ENCODE measurements at regions of chr1 and their contacts with region 1.

Region 1: GRCh38 chr1:234499119-234499942 is 20.4 kb upstream of the TARBP1 start:
- DNase-seq: peak; percentile 93
- ATAC-seq: peak; percentile 54
- H3K4me3 Mint-ChIP-seq: no peak overlapping the region
- H3K27ac Mint-ChIP-seq: peak overlapping the region; percentile 80
- H3K4me1 Mint-ChIP-seq: peaks cover 76% of the 10 kb centered on the region
- H3K27me3 Mint-ChIP-seq: peaks cover 3% of the 10 kb centered on the region

Region 2: DNA sequence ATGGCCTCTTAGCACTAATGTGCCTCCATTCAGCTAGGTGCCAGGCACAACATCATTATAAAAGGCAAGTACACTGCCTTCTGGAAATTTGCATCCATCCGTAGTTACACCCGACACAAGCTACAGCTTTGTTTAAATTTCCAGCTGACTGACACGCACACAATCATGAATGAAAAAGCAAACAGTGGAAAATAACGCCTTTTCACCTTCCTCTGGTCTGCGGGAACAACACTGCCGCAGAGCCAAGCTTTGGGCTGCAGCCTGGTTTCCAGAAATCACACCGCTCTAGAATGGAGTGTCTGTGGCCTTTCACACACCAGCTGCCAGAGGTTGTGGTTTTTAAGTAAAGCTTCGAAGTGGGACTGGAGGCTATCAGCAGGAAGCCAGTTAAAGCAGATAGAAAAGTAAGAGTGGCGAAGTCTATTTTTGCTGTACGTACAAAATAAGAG is 268.9 kb before region 1 on chr1:
- CTCF ChIA-PET with region 1: no interaction called
- POLR2A ChIA-PET with region 1: no interaction called
- intact Hi-C with region 1: no loop called
- DNase-seq: peak; percentile 41
- ATAC-seq: peak; percentile 47
- H3K4me3 Mint-ChIP-seq: no peak overlapping the region
- H3K27ac Mint-ChIP-seq: no peak overlapping the region
- H3K4me1 Mint-ChIP-seq: peaks cover 8% of the 10 kb centered on the region
- H3K27me3 Mint-ChIP-seq: peaks cover 6% of the 10 kb centered on the region

Region 3: GRCh38 chr1:234427950-234428642 is 71.2 kb before region 1 on chr1:
- CTCF ChIA-PET with region 1: no interaction called
- POLR2A ChIA-PET with region 1: no interaction called
- intact Hi-C with region 1: no loop called
- DNase-seq: no peak
- ATAC-seq: no peak
- H3K4me3 Mint-ChIP-seq: no peak overlapping the region
- H3K27ac Mint-ChIP-seq: no peak overlapping the region
- H3K4me1 Mint-ChIP-seq: no peaks in the 10 kb centered on the region
- H3K27me3 Mint-ChIP-seq: no peaks in the 10 kb centered on the region

Region 4: GRCh38 chr1:234486498-234487448 is 12.6 kb before region 1 on chr1:
- CTCF ChIA-PET with region 1: interaction called, 15 read pairs
- POLR2A ChIA-PET with region 1: interaction called, 9 read pairs
- intact Hi-C with region 1: loop called (anchors 1 to 2 kb)
- DNase-seq: peak; percentile 61
- ATAC-seq: peak; percentile 16
- H3K4me3 Mint-ChIP-seq: no peak overlapping the region
- H3K27ac Mint-ChIP-seq: peak overlapping the region; percentile 98
- H3K4me1 Mint-ChIP-seq: peaks cover 43% of the 10 kb centered on the region
- H3K27me3 Mint-ChIP-seq: peaks cover 16% of the 10 kb centered on the region

Region 5: GRCh38 chr1:234599617-234600417 is 100.5 kb after region 1 on chr1:
- CTCF ChIA-PET with region 1: interaction called, 17 read pairs
- POLR2A ChIA-PET with region 1: interaction called, 3 read pairs
- intact Hi-C with region 1: loop called (anchors 1 to 2 kb)
- DNase-seq: peak; percentile 86
- ATAC-seq: peak; percentile 73
- H3K4me3 Mint-ChIP-seq: peak overlapping the region; percentile 97
- H3K27ac Mint-ChIP-seq: peak overlapping the region; percentile 91
- H3K4me1 Mint-ChIP-seq: peaks cover 49% of the 10 kb centered on the region
- H3K27me3 Mint-ChIP-seq: no peaks in the 10 kb centered on the region

Region 6: DNA sequence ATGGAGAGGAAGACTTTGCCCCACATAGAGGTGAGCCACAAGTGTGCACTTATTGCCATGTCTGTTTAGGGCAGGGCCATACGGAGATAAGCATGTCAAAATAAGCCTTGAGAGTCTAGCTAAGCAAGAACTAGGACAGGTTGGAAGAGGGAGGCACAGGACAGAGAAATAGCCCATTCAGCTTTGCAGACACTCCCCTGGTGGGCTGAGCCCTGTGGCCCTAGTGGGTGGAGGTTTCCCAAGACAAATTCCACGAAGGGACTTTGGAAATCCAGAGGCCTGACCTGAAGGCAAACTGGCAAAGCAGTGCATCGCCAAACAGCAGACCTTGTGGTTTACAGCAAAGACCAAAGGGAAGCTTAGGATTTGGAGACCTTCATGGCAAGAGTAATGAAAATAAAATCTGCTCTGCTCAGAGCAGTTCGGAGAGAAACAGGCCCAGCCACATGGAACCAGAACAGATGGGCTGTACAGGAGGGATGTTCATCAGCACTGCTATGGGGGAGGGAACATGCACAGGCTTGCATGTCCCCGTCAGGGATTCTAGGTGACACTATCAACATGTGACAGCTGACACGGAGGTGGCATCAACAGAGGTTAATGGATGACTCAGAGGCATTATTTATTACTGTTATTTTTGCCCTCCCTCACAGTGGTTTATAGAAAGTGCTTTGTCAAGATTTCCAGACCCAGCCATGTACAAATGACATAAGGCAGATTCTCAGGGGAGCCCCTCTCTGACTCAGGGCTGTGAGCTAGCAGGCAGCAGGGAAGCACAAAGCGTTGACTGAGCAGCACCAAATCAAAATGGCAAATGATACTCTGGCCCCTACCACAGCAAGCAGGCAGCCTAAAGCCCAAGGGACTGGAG is 200.7 kb after region 1 on chr1:
- CTCF ChIA-PET with region 1: no interaction called
- POLR2A ChIA-PET with region 1: no interaction called
- intact Hi-C with region 1: no loop called
- DNase-seq: peak; percentile 48
- ATAC-seq: peak; percentile 91
- H3K4me3 Mint-ChIP-seq: no peak overlapping the region
- H3K27ac Mint-ChIP-seq: no peak overlapping the region
- H3K4me1 Mint-ChIP-seq: peaks cover 6% of the 10 kb centered on the region
- H3K27me3 Mint-ChIP-seq: no peaks in the 10 kb centered on the region

Region 7: GRCh38 chr1:234772345-234773147 is 273.2 kb after region 1 on chr1:
- CTCF ChIA-PET with region 1: interaction called, 3 read pairs
- POLR2A ChIA-PET with region 1: no interaction called
- intact Hi-C with region 1: loop called (anchors 2 to 5 kb)
- DNase-seq: peak; percentile 95
- ATAC-seq: peak; percentile 78
- H3K4me3 Mint-ChIP-seq: peak overlapping the region; percentile 45
- H3K27ac Mint-ChIP-seq: peak overlapping the region; percentile 95
- H3K4me1 Mint-ChIP-seq: peaks cover 59% of the 10 kb centered on the region
- H3K27me3 Mint-ChIP-seq: peaks cover 1% of the 10 kb centered on the region

Region 8: GRCh38 chr1:234963180-234963903 is 464.0 kb after region 1 on chr1:
- CTCF ChIA-PET with region 1: no interaction called
- POLR2A ChIA-PET with region 1: no interaction called
- intact Hi-C with region 1: loop called (anchors 2 to 10 kb)
- DNase-seq: peak; percentile 96
- ATAC-seq: peak; percentile 81
- H3K4me3 Mint-ChIP-seq: peak overlapping the region; percentile 45
- H3K27ac Mint-ChIP-seq: peak overlapping the region; percentile 96
- H3K4me1 Mint-ChIP-seq: peaks cover 76% of the 10 kb centered on the region
- H3K27me3 Mint-ChIP-seq: no peaks in the 10 kb centered on the region

Region 9: GRCh38 chr1:235105051-235106043 is 606.0 kb after region 1 on chr1:
- CTCF ChIA-PET with region 1: no interaction called
- POLR2A ChIA-PET with region 1: no interaction called
- intact Hi-C with region 1: loop called in 1 of 2 experiments (anchors 1 kb)
- DNase-seq: peak; percentile 26
- ATAC-seq: peak; percentile 59
- H3K4me3 Mint-ChIP-seq: peak overlapping the region; percentile 60
- H3K27ac Mint-ChIP-seq: peak overlapping the region; percentile 56
- H3K4me1 Mint-ChIP-seq: peaks cover 44% of the 10 kb centered on the region
- H3K27me3 Mint-ChIP-seq: peaks cover 4% of the 10 kb centered on the region

Measured in activated CD4-positive, alpha-beta T cell treated with anti-CD3 and anti-CD28 coated beads for 36 hours (primary cell).